ENCODE measurements at regions of chr15 and their contacts with region 1.

Region 1: DNA sequence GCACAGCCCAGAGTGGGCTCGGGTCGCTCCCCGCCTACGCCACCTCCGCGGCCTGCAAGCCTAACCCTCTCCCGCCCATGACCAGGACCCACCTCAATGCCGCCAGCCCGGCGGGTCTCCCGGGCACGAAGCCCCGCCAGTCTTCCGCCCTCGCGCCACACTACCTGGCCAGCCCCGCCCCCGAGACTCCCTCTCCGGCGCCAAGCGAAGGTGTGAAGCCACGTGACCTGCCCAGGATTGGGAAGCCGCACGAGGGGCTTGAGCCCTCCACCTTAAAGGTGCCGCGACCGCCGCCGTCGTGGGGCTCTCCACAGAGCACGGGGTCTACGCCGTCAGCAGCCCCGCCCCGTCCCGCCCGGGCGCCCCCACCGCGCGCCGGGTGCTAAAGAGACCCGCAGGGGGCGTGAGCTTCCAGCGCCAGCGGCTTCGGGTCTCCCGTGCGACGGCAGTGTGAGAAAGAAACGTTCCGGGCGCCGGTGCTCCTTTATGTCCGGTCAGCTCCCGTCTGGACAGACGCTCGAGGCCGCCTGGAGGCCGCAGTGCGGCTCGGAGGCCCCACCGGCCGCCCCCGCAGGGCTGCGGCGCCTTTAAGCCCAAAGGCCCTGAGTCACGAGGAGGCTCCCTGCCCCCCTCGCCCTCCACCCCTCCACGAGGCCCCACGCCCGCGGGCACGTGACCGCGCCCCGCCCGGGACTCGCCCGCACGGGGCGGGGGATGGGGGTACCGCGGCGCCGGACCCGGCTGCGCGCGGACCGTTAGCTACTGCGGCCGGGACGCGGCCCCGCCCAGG is at the start of gene CPEB1:
- DNase-seq: peak in 1 of 2 donors; percentile 72
- H3K4me3 ChIP-seq: peak within 1 kb of the TSS; percentile 66 to 78
- H3K27ac ChIP-seq: peak within 1 kb of the TSS; percentile 33 to 54
- H3K4me1 ChIP-seq: peaks cover 8 to 12% of the 10 kb centered on the region in 2 donors
- H3K27me3 ChIP-seq: no peaks in the 10 kb centered on the region
- CTCF ChIP-seq: peak in 2 of 3 experiments; percentile 4 to 9
- total RNA-seq, gene CPEB1: 2.4 TPM

Region 2: GRCh38 chr15:82530606-82531379 is 116.4 kb before region 1 on chr15:
- intact Hi-C with region 1: loop called (anchors 1 kb)
- DNase-seq: peak in 1 of 2 donors; percentile 81
- H3K4me3 ChIP-seq: no peak overlapping the region
- H3K27ac ChIP-seq: no peak overlapping the region
- H3K4me1 ChIP-seq: no peaks in the 10 kb centered on the region
- H3K27me3 ChIP-seq: no peaks in the 10 kb centered on the region
- CTCF ChIP-seq: peak; percentile 61 to 73 (median 67)

Region 3: DNA sequence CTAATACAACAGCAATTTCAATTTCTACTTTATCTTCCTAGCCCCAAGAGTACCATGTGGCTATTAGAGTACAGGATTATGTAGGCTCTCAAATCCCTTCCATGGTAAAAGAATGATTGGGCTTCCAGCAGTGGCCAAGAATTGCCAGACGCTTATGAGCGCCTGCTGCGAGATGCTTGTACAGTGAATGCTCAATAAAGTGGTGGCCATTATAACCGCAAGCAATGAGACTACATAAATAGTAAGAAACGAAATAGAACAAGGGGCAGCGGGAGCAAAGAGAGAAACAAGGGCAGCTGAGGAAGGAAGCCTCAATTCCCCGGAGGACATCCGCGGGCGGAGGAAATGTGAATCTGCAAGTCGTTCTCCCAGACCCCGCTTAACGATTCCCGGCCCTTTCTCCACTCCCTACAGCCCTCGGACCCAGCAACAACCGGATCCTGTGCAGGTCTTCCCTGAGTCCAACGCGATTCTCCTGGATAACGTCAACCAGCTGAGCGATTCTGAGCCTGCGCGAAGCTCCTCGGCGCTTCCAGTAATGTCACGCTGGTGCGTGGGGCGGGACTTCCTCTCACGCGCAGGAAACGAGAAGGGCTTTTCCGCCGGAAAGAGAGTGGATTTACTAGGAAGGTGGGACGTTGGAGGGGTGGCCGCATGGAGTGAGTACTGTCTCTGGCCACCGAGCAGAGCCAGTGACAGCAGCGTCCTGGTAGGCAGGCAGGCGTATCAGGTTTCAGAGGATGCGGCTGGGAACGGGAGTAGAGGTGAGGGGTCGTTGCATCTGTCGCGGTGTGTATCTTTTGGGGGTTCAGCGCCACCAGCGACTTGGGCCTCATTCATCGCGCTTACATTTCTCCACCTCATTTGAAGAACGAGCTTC is 103.0 kb after region 1 on chr15:
- intact Hi-C with region 1: loop called (anchors 2 kb)
- DNase-seq: peak; percentile 73 to 95
- H3K4me3 ChIP-seq: peak overlapping the region; percentile 73 to 90
- H3K27ac ChIP-seq: peak overlapping the region; percentile 85 to 89
- H3K4me1 ChIP-seq: peaks cover 5 to 7% of the 10 kb centered on the region in 2 donors
- H3K27me3 ChIP-seq: no peaks in the 10 kb centered on the region
- CTCF ChIP-seq: no peak

Region 4: DNA sequence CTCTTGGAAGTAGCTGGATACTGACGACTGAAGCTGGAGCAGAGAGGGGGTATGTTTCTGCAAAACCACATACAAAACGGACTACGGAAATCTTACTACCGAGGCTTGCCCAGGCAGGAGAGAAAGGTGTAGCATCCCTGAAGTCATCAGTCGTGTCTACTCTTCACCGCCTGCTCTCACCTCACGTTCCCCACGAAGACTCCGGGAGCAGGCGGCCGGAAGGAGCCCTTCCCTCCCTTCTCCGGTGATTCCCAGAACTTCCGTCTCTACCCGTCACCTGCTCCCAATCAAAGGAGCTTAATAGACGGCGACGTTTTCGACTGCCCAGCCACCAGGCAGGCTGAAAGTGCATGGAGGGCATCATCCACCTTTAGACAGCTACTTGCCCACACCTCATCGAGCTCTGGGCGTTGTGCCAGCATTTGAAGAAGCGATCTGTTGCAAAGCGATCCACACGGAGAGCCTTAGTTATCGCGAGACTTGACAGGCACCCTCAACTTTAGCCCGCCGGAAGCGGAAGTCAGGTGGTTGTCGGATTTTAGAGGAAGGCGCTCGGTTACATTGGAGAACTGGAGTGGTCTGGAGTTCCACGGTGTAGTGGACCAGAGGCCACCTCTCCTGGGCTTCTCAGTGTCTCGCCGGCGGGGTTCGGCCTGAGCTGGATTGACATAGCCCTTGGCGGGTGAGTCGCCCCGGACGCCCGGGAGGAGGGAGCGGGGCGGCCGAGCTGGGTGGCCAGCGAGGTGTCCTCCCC is 338.6 kb after region 1 on chr15 and contains the start of gene RAMAC:
- intact Hi-C with region 1: loop called (anchors 10 kb)
- DNase-seq: peak; percentile 83 to 97
- H3K4me3 ChIP-seq: peak within 1 kb of the TSS; percentile 78 to 89
- H3K27ac ChIP-seq: peak within 1 kb of the TSS; percentile 63 to 72
- H3K4me1 ChIP-seq: peaks cover 0 to 14% of the 10 kb centered on the region in 2 donors
- H3K27me3 ChIP-seq: no peaks in the 10 kb centered on the region
- CTCF ChIP-seq: no peak
- total RNA-seq, gene RAMAC: 4.8 TPM